ENCODE measurements at regions of chr2 and their contacts with region 1.

Region 1: GRCh38 chr2:210503001-210503623 is 26.6 kb upstream of the LANCL1 start:
- DNase-seq: peak; percentile 18
- H3K4me3 ChIP-seq: no peak overlapping the region
- H3K27ac ChIP-seq: no peak overlapping the region
- H3K27me3 ChIP-seq: no peaks in the 10 kb centered on the region
- CTCF ChIP-seq: peak; percentile 94

Region 2: DNA sequence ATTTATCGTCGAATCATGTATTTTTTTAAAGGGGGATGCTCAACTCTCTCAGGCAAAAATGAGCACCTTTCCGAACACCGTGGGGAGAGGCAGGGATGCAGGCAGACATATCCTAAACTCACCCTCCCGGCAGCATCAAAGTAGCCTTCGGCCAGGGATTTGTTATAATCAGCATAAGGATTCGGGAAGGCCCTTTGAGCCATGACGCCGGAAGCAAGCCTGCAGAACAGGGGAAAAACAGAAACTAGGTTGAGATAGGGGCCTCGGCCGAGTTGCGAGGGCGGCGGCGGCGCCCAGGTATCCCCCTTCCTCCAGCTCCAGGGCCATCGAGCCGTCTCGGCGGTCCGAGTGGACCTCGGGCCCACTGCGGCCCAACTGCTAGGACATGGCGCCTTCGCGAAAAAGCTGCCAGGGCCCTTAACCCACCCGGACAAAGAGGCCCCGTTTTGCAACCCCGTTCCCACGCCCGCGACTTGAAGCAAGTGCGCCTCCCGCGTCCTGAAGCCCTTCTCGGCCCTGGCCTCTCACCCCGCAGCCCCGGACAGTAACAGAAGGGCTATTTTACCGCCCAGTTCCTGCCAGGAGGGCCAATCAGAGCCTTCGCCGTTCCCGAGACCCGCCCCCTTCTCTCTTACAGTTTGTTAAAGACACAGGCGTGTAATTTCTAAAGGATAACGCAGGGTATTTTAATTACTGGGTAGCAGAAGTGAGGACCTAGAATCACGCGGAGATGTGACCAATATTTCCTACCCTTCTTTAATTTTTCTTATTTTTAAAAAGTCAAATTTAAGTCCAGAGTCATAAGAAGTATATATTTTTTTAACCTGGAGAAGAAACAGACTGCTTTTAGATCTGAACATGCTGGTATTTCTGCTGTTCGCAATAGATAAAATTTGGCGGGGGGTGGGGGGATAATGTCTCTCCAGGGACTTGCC is 26.7 kb before region 1 on chr2 and contains the start of gene LANCL1:
- CTCF ChIA-PET with region 1: interaction called, 14 read pairs
- POLR2A ChIA-PET with region 1: no interaction called
- DNase-seq: peak; percentile 61
- H3K4me3 ChIP-seq: peak within 1 kb of the TSS; percentile 76
- H3K27ac ChIP-seq: no peak within 1 kb of the TSS
- H3K27me3 ChIP-seq: no peaks in the 10 kb centered on the region
- CTCF ChIP-seq: no peak
- polyA plus RNA-seq, gene LANCL1: 55.5 and 66.6 TPM in 2 replicates

Region 3: DNA sequence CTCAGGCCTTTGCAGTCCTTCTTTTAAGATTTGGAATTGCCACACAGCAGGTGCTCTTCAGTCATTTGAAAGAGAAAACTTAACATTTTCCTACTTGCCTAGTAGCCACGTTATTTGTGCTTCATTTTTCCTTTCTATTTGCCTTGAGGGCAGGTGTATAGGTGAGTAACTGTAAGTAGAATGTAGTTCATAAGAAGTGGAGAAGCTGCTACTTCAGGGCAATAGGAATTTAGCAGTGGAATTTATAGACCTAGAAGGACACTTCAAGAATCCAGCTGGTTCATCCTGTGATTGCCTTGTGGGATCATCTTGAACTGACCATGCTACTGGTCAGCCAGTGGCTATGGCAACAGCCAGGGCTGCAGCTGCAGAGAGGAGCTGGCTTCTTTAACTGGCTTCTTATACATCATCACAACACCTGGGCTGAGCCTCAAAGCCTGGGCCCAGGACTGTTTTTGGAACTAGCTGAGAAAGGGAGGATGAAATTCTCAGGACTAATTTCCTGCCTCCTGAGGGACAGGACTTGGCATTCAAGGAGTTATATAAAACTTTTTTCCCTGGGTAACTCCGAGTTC is 21.4 kb before region 1 on chr2:
- CTCF ChIA-PET with region 1: interaction called, 18 read pairs
- POLR2A ChIA-PET with region 1: no interaction called
- DNase-seq: no peak
- H3K4me3 ChIP-seq: no peak overlapping the region
- H3K27ac ChIP-seq: no peak overlapping the region
- H3K27me3 ChIP-seq: no peaks in the 10 kb centered on the region
- CTCF ChIP-seq: no peak

Region 4: DNA sequence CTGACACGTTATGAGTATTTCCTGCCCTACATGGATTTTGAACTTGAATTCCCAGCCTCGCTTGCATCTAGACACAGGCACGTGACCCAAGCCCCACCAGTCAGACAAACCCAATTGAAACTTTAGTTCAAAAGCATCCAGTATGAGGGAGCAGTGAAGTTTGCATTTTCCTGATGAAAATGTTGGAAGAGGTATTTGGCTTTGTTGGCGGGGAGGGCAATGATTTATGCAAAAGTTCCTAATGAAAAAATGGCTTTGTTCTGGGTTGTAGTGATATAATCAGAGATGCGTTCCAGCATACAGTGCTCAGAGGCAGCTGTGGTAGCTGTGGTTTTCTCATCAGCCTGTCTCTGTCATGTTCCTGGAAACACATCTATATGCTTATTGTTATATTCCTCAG is 16.5 kb after region 1 on chr2:
- CTCF ChIA-PET with region 1: interaction called, 20 read pairs
- POLR2A ChIA-PET with region 1: no interaction called
- DNase-seq: no peak
- H3K4me3 ChIP-seq: no peak overlapping the region
- H3K27ac ChIP-seq: no peak overlapping the region
- H3K27me3 ChIP-seq: no peaks in the 10 kb centered on the region
- CTCF ChIP-seq: no peak

Region 5: GRCh38 chr2:210527286-210527685 is 24.2 kb after region 1 on chr2:
- CTCF ChIA-PET with region 1: interaction called, 20 read pairs
- POLR2A ChIA-PET with region 1: no interaction called
- DNase-seq: no peak
- H3K4me3 ChIP-seq: no peak overlapping the region
- H3K27ac ChIP-seq: no peak overlapping the region
- H3K27me3 ChIP-seq: no peaks in the 10 kb centered on the region
- CTCF ChIP-seq: no peak

Region 6: GRCh38 chr2:210546424-210547208 is 43.5 kb after region 1 on chr2:
- CTCF ChIA-PET with region 1: interaction called, 16 read pairs
- POLR2A ChIA-PET with region 1: no interaction called
- DNase-seq: no peak
- H3K4me3 ChIP-seq: no peak overlapping the region
- H3K27ac ChIP-seq: no peak overlapping the region
- H3K27me3 ChIP-seq: no peaks in the 10 kb centered on the region
- CTCF ChIP-seq: no peak